Thyroid gland (tissue), 4 donors: ENCODE measurements at regions of chr16 and their contacts with region 1.

Region 1: GRCh38 chr16:57519796-57520360 is 16.5 kb downstream of the CCDC102A start:
- DNase-seq: peak; percentile 77 to 79
- H3K4me3 ChIP-seq: no peak overlapping the region
- H3K27ac ChIP-seq: no peak overlapping the region
- H3K4me1 ChIP-seq: no peaks in the 10 kb centered on the region
- H3K27me3 ChIP-seq: no peaks in the 10 kb centered on the region
- CTCF ChIP-seq: peak; percentile 81 to 99 (median 90)
- POLR2A ChIP-seq: no peak

Region 2: DNA sequence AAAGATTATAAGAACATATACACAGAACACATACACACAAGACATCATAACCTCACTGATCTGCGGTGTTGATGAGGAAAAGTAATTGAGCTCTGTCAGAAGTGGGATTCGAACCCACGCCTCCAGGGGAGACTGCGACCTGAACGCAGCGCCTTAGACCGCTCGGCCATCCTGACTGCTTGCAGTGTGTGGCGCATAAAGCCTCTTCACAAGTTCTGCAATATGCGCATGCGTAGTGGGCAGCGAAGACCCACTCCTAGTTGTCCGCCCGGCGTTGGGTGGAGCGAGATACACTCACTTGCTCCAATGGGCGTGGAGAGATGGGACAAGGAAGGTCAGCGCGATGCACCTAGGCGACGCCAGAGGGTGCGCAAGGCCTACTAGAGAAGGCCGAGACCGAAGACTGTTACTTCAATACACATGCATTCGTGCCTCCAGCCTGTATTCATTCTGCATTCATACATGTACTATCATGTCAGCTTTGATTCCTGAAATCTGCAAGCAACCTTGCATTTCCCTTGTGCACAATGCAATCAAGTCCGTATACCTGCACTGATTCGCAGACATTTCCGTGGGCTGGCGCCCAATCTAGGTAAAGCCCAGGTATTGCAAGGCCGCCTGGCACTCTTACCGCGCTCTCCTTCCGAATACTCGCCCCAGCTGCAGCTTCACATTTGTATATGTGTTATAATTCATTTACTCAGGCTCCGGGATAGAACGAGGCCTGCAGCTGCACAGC is 219.3 kb before region 1 on chr16:
- intact Hi-C with region 1: loop called (anchors 10 kb)
- DNase-seq: peak; percentile 100
- H3K4me3 ChIP-seq: peak overlapping the region in 2 of 3 donors; percentile 3 to 26
- H3K27ac ChIP-seq: peak overlapping the region; percentile 86 to 90 (median 89)
- H3K4me1 ChIP-seq: peaks cover 9 to 37% of the 10 kb centered on the region in 2 donors
- H3K27me3 ChIP-seq: no peaks in the 10 kb centered on the region
- CTCF ChIP-seq: peak; percentile 75 to 100 (median 96)
- POLR2A ChIP-seq: no peak

Region 3: GRCh38 chr16:57447186-57447962 is 72.5 kb before region 1 on chr16 and contains the starts of genes CIAPIN1 and COQ9:
- intact Hi-C with region 1: no loop called
- DNase-seq: peak; percentile 95 to 97
- H3K4me3 ChIP-seq: peak within 1 kb of the TSS; percentile 53 to 97 (median 88)
- H3K27ac ChIP-seq: peak within 1 kb of the TSS; percentile 65 to 92 (median 73)
- H3K4me1 ChIP-seq: peaks cover 18 to 20% of the 10 kb centered on the region in 2 donors
- H3K27me3 ChIP-seq: no peaks in the 10 kb centered on the region
- CTCF ChIP-seq: no peak
- POLR2A ChIP-seq: peak; percentile 31 to 91
- total RNA-seq, gene CIAPIN1: 29.2 to 41.2 (median 35.5) TPM
- total RNA-seq, gene COQ9: 41.8 to 112 (median 76.1) TPM

Region 4: GRCh38 chr16:57462209-57462977 is 57.5 kb before region 1 on chr16 and contains the start of gene POLR2C:
- intact Hi-C with region 1: loop called (anchors 5 kb)
- DNase-seq: peak; percentile 86 to 89
- H3K4me3 ChIP-seq: peak within 1 kb of the TSS; percentile 54 to 96 (median 86)
- H3K27ac ChIP-seq: peak within 1 kb of the TSS; percentile 80 to 89 (median 85)
- H3K4me1 ChIP-seq: peaks cover 14 to 23% of the 10 kb centered on the region in 2 donors
- H3K27me3 ChIP-seq: no peaks in the 10 kb centered on the region
- CTCF ChIP-seq: peak; percentile 86 to 98 (median 96)
- POLR2A ChIP-seq: peak in 1 of 2 donors; percentile 79
- total RNA-seq, gene POLR2C: 126 to 212 (median 174) TPM

Region 5: DNA sequence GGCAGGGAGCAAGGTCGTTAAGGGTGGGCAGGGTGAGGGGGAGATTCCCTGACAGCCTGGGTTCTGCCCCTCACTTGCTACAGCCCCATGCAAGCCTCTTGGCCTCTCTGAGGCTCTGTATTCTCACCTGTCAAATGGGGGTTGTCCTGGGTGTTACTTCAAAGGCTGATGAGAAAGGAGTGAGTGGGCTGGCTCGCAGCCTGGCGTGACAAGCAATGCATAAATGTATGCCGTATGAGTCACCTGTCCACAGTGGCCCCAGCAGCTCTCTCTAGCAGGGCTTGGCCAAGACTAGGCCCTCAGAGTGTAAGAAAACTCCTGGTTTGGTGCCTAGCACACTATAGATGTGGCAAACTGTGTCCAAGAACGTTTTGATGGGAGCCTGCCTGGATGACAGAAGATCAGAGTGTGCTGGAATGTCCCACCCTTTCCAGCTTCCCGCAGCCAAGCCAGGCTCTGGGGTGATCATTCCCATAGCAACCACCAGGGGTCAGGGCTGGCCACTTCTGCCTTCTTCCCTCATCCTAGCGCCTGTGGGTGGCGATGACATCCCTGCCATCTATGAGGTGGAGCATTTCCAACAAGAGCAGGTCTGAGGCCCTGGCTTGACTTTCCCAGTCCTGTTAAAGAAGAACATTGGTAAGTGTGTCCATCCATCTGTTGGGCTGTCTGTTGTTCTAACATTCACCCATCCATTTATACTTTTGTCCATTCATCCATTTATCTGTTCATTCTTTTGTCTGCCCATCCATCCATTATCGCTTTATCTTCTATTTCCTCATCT is 71.4 kb after region 1 on chr16:
- intact Hi-C with region 1: no loop called
- DNase-seq: peak; percentile 79 to 81
- H3K4me3 ChIP-seq: no peak overlapping the region
- H3K27ac ChIP-seq: peak overlapping the region in 1 of 3 donors; percentile 34
- H3K4me1 ChIP-seq: no peaks in the 10 kb centered on the region
- H3K27me3 ChIP-seq: no peaks in the 10 kb centered on the region
- CTCF ChIP-seq: peak; percentile 76 to 98 (median 90)
- POLR2A ChIP-seq: no peak